Endothelial cell of umbilical vein (primary cell): ENCODE measurements at regions of chr6 and their contacts with region 1.

Region 1: GRCh38 chr6:41966961-41967311 is 25.3 kb upstream of the CCND3 start:
- DNase-seq: peak; percentile 76
- H3K4me3 ChIP-seq: no peak overlapping the region
- H3K27ac ChIP-seq: peak overlapping the region; percentile 58
- H3K4me1 ChIP-seq: peaks cover 38% of the 10 kb centered on the region
- H3K27me3 ChIP-seq: no peaks in the 10 kb centered on the region
- CTCF ChIP-seq: no peak
- POLR2A ChIP-seq: peak; percentile 15

Region 2: DNA sequence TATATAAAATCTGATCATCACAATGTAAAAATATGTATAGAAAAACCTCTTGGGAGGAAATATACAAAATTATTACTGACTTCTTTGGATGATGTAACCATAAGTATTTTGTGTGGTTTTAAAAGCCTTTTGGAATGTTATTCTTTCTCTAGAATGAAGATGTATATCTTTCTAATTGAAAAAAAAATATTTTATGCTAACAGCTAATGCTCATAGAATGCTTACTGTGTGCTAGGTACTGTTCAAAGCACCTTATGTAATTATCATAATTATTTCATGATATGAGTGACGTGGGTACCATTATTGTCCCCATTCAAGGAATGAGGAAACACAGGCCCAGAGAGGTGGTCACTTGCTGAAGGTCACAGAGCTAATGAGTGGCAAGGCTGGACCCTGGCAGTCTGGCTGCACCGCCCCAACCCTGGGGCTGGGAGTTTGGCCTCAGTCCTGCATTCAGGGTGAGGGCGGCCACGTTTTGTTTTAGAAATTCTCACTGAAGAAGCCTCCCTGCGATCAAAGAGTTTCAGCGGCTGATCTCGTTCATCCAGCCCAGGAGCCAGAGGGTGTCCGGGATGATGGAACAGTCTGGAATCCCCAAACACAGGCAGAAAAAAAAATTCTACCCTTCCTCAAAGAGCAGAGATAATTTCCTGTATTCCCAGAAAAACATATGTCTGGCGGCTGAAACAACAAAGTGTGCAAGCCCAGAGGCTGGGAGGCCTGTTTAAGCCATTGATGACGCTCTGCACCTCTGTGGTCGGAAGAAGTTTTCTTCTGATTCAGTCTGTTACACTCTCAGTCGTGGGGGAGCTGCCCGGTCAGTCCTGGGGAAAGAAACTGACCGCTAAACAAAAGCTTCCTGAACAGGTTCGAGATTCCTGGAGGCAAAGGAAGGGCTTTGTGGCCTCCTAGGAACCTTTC is 268.8 kb before region 1 on chr6:
- CTCF ChIA-PET with region 1: no interaction called
- POLR2A ChIA-PET with region 1: no interaction called
- dilution Hi-C with region 1: no loop called
- intact Hi-C with region 1: no loop called
- DNase-seq: peak; percentile 75
- H3K4me3 ChIP-seq: no peak overlapping the region
- H3K27ac ChIP-seq: peak overlapping the region; percentile 87
- H3K4me1 ChIP-seq: peaks cover 19% of the 10 kb centered on the region
- H3K27me3 ChIP-seq: peaks cover 0 to 2% of the 10 kb centered on the region in 2 experiments
- CTCF ChIP-seq: no peak
- POLR2A ChIP-seq: no peak

Region 3: DNA sequence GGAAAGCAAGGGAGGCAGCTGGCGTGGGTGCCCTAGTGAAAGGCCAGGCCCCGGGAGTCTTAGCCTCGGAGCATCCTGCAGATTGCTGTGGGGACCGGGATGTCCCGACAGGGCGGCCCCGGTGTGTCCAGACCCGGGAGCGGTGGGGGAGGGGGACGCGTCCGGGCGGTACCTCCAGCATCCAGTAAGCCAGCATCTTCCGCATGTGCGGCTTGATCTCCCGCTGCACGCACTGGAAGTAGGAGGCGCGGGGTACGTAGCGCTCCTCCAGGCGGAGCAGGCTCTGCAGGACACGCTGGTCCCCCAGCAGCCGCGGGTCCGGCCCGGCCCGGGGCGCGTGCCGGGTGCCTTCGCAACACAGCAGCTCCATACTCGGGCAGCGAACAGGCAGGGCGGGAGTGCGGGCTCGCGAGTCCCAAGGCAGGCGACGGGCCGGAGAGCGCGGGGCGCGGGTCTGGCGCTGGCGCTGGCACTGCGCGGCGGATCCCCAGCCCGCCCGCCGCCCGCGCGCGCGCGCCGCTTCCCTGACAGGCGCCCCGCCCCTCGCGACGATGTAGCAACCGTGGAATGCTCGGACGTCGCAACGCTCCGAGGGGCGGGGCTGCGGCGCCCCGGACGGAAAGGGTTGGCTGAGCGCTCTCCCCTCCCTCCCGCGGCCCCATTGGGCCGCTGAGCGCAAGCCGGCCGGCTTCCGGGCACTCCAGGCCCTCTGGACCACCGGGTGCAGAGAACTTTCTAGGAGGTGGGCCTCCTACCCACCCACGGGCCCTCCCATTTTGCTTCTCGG is 25.5 kb before region 1 on chr6 and contains the start of gene CCND3:
- CTCF ChIA-PET with region 1: interaction called, 10 read pairs
- POLR2A ChIA-PET with region 1: interaction called, 8 read pairs
- dilution Hi-C with region 1: no loop called
- intact Hi-C with region 1: loop called (anchors 1 kb)
- DNase-seq: peak; percentile 78
- H3K4me3 ChIP-seq: peak within 1 kb of the TSS; percentile 58 to 88 (median 76)
- H3K27ac ChIP-seq: peak within 1 kb of the TSS; percentile 57
- H3K4me1 ChIP-seq: peaks cover 34% of the 10 kb centered on the region
- H3K27me3 ChIP-seq: no peaks in the 10 kb centered on the region
- CTCF ChIP-seq: no peak
- POLR2A ChIP-seq: peak; percentile 69
- total RNA-seq, gene CCND3: 87.5 and 96.7 TPM in 2 replicates

Region 4: DNA sequence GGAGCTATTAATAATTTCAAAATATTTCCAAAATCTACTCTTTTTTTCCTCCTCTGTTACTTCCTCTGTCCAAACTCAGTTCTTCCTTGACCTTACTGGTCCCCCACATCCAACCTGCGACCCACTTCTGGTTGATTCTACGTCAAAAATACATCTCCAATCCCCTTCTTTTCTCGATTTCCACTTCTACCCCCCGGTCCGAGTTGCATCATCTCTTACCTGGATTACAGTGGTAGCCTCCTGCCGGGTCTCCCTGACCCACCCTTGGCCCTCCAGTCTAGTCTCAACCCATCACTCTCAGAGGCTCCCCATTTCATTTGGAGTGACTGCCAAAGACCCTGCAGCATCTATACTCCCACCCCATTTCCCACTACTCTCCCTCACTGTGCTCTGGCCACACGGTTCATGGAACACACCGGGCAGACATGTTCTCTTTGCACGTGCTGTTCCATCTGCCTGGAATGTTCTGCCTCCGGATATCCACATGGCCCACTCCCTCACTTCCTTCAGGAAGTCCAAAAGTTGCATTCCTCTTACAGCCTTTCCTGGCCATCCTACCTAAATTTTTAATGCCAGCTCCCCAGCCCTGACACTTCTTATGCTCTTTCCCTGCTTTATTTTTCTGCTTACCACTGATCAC is 19.2 kb before region 1 on chr6:
- CTCF ChIA-PET with region 1: interaction called, 3 read pairs
- POLR2A ChIA-PET with region 1: no interaction called
- dilution Hi-C with region 1: no loop called
- intact Hi-C with region 1: loop called (anchors 2 kb)
- DNase-seq: no peak
- H3K4me3 ChIP-seq: no peak overlapping the region
- H3K27ac ChIP-seq: no peak overlapping the region
- H3K4me1 ChIP-seq: peaks cover 9% of the 10 kb centered on the region
- H3K27me3 ChIP-seq: no peaks in the 10 kb centered on the region
- CTCF ChIP-seq: no peak
- POLR2A ChIP-seq: no peak

Region 5: DNA sequence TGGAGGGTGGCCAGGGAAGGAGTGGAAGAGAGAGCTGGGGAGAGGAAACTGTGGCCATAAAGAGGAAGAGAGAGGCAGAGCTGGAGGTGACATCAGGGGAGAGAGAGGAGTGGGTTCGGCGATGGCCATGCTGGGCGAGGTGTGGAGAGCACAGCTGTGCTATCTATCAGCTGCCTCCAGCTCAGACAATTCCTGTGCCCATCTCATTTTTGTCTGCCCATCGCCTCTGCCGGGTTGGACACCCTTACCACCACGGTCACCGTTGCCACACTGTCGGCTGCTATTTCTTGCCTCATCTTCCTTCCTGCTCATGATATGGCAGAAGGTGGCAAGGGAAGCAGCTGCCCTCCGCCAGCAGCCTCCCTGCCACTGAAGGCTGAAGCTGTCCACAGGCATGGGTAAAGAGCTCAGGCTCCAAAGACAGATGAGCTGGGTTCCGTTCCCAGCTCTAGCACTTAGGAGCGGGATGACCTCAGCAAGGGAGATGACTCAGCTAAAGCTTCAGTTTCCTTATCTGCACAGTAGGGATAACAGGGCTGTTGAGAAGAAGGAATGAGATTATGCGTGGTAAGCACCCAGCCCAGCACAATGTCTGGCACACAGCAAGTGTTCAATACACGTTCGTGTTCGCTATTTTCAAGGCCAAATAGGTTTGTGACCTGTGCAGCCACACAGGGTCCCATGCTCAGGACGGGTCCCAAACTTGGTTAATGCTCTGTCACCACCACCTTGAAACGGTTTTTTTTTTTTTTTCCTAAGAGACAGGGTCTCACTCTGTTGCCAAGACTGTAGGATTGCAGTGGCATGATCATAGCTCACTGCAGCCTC is 61.5 kb after region 1 on chr6:
- CTCF ChIA-PET with region 1: interaction called, 5 read pairs
- POLR2A ChIA-PET with region 1: interaction called, 3 read pairs
- dilution Hi-C with region 1: no loop called
- intact Hi-C with region 1: loop called (anchors 5 kb)
- DNase-seq: peak; percentile 62
- H3K4me3 ChIP-seq: no peak overlapping the region
- H3K27ac ChIP-seq: peak overlapping the region; percentile 34
- H3K4me1 ChIP-seq: peaks cover 10% of the 10 kb centered on the region
- H3K27me3 ChIP-seq: no peaks in the 10 kb centered on the region
- CTCF ChIP-seq: no peak
- POLR2A ChIP-seq: no peak